PC-3 (cell line): ENCODE measurements at regions of chr20 and their contacts with region 1.

Region 1: DNA sequence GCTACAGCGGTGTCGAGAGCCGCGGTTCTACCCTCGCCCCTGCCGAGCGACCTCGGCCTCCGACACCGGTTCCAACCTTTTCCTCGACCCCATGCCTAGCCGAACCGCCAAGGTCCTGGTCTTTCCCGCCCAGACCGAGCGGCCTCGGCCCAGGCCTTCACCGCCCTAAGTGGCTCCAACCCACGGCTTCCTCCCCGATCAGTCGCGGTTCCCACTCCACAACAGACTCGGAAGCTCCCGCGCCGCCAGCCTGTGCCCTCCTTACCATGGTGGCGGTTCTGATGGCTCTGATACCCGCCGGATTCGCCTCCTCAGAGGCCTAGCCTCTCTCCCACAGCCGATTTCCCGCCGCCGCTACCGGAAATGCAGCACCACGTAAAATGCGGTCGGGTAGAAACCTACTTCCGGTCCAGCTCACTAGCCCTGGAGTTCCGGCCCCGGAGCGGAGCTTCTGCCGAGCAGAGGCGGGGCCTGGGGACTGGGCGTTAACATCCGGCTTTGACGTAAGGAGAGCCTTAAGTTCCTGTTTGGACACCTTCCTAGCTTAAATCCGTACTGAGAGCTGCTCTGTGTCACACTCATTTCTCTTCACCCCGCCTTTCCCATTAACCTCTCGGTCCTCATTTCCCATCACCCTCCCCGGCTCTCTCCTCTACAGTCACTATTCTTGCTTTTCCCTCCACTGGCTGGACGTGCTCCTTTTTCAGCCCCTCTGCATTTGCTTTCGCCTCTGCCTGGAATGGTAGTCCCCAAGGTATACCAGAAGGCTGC is at the start of gene SNRPB:
- DNase-seq: peak; percentile 99
- ATAC-seq: peak; percentile 97
- H3K4me3 ChIP-seq: peak within 1 kb of the TSS; percentile 99
- H3K27ac ChIP-seq: peak within 1 kb of the TSS; percentile 71
- H3K4me1 ChIP-seq: peaks cover 20% of the 10 kb centered on the region
- H3K27me3 ChIP-seq: no peaks in the 10 kb centered on the region
- CTCF ChIP-seq: no peak
- total RNA-seq, gene SNRPB: 664 and 677 TPM in 2 replicates

Region 2: GRCh38 chr20:2246069-2246491 is 224.5 kb before region 1 on chr20:
- CTCF ChIA-PET with region 1: no interaction called
- POLR2A ChIA-PET with region 1: no interaction called
- intact Hi-C with region 1: no loop called
- DNase-seq: no peak
- ATAC-seq: no peak
- H3K4me3 ChIP-seq: no peak overlapping the region
- H3K27ac ChIP-seq: no peak overlapping the region
- H3K4me1 ChIP-seq: no peaks in the 10 kb centered on the region
- H3K27me3 ChIP-seq: peaks cover 70% of the 10 kb centered on the region
- CTCF ChIP-seq: no peak

Region 3: GRCh38 chr20:2508631-2509467 is 38.2 kb after region 1 on chr20 and contains the start of gene ZNF343:
- CTCF ChIA-PET with region 1: no interaction called
- POLR2A ChIA-PET with region 1: no interaction called
- intact Hi-C with region 1: loop called (anchors 1 kb)
- DNase-seq: peak; percentile 88
- ATAC-seq: peak; percentile 94
- H3K4me3 ChIP-seq: peak within 1 kb of the TSS; percentile 85
- H3K27ac ChIP-seq: no peak within 1 kb of the TSS
- H3K4me1 ChIP-seq: peaks cover 16% of the 10 kb centered on the region
- H3K27me3 ChIP-seq: peaks cover 4% of the 10 kb centered on the region; the same call in 1 of the 2 replicates
- CTCF ChIP-seq: no peak
- total RNA-seq, gene ZNF343: 7.7 and 8.2 TPM in 2 replicates